PC-9 (cell line): ENCODE measurements at regions of chr1 and their contacts with region 1.

Region 1: DNA sequence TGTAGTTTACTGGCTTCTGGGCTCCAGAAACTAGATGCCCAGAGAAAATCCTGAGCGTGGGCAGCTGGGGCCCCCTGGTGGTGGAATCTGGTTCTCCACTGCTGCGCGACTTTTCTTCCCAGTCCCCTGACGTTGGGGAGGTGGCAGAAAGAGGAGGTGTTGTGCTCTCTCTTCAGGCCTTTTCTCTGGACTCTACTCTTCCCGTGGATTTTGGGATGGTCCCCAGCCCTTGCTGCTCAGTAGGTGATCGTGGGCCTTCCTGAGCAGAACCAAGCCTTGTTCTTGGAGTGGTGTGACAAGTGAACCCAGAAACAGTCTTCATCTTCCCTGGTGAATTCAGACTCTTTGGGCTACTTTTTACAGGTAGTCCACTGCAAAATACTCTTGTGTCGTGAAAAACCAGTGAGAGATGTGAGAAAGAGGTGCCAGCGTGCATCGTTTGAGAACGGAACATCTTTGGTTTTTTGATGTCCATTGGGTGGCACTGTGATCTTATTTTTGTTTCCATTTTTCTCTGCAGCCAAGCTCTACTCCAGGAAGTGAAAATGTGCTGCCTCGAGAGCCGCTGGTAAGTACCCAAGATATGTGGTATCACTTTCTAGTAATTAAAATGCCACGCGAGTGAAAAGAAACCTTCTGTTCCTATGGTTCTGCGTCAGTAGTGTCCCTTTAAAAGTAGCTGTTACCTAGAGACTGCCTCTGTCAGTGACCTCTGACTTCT is 20.2 kb downstream of the PEX14 start:
- DNase-seq: peak; percentile 45 to 76
- H3K4me3 ChIP-seq: no peak overlapping the region
- H3K27ac ChIP-seq: no peak overlapping the region
- H3K4me1 ChIP-seq: no peaks in the 10 kb centered on the region
- H3K27me3 ChIP-seq: no peaks in the 10 kb centered on the region
- CTCF ChIP-seq: peak; percentile 87

Region 2: GRCh38 chr1:10283318-10283984 is 211.5 kb before region 1 on chr1:
- CTCF ChIA-PET with region 1: no interaction called
- POLR2A ChIA-PET with region 1: no interaction called
- intact Hi-C with region 1: no loop called
- DNase-seq: peak; percentile 48 to 50
- H3K4me3 ChIP-seq: no peak overlapping the region
- H3K27ac ChIP-seq: no peak overlapping the region
- H3K4me1 ChIP-seq: no peaks in the 10 kb centered on the region
- H3K27me3 ChIP-seq: no peaks in the 10 kb centered on the region
- CTCF ChIP-seq: no peak

Region 3: DNA sequence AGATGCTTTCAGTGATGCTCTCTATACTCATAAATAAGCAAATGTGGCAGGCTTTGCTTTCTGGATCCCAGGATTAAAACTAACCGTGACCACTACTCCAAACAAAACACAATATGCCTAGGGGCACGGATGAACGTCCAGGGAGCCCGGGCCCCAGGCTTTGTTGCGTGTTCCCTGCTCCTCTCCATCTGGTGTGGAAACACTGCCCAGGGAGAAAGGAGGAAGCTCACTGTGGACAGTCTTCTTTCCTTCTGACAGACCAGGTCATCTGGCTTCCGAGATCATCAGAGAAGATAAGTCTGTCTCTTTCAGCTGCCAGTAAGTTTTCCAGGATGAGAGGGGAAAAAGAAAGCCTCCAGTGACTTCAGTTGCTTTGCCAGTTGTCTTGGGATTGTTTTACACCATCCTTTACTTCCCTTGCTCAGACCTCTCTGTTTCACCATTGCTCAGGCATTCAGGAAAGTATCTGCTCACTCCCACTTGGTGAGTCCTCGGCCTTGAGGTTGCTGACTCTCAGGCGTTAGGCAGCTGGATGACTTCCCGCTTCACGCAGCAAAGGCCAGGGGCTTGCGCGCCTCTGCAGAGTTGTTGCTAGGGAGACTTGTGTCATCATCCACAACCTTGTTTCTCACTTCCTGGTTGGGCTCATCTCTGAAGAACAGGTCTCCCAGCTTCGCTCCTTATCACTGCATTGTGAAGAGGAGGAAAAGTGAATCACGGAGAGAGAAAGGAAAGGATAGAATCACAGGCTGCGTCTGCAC is 116.7 kb before region 1 on chr1:
- CTCF ChIA-PET with region 1: interaction called, 4 read pairs
- POLR2A ChIA-PET with region 1: no interaction called
- intact Hi-C with region 1: loop called (anchors 1 kb)
- DNase-seq: peak; percentile 86 to 96
- H3K4me3 ChIP-seq: peak overlapping the region; percentile 42; the same call in 1 of the 2 replicates
- H3K27ac ChIP-seq: peak overlapping the region; percentile 95
- H3K4me1 ChIP-seq: peaks cover 39% of the 10 kb centered on the region
- H3K27me3 ChIP-seq: no peaks in the 10 kb centered on the region
- CTCF ChIP-seq: no peak

Region 4: DNA sequence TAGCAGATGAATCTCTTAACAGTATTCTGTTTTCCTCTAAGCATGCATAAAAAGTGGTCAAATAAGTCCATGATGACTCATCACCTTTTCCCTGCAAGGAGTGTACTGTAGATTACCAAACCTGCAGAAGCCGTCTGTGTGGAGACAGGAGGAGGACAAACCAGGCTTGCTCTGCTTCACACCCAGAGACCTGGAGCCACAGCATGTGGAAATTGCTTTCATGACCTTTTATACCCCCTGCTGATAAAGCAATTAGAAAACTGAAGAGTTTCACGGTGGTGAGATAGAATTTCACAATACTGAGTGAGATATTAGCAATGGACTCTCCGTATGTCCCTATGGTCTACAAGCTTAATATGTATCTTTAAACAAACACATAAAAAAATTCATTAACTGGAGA is 35.7 kb before region 1 on chr1:
- CTCF ChIA-PET with region 1: interaction called, 10 read pairs
- POLR2A ChIA-PET with region 1: interaction called, 6 read pairs
- intact Hi-C with region 1: no loop called
- DNase-seq: peak; percentile 70 to 97
- H3K4me3 ChIP-seq: no peak overlapping the region
- H3K27ac ChIP-seq: peak overlapping the region; percentile 78
- H3K4me1 ChIP-seq: peaks cover 19% of the 10 kb centered on the region
- H3K27me3 ChIP-seq: no peaks in the 10 kb centered on the region
- CTCF ChIP-seq: no peak

Region 5: GRCh38 chr1:10585948-10586524 is 91.1 kb after region 1 on chr1:
- CTCF ChIA-PET with region 1: interaction called, 13 read pairs
- POLR2A ChIA-PET with region 1: no interaction called
- intact Hi-C with region 1: no loop called
- DNase-seq: no peak
- H3K4me3 ChIP-seq: no peak overlapping the region
- H3K27ac ChIP-seq: no peak overlapping the region
- H3K4me1 ChIP-seq: no peaks in the 10 kb centered on the region
- H3K27me3 ChIP-seq: no peaks in the 10 kb centered on the region
- CTCF ChIP-seq: no peak

Region 6: DNA sequence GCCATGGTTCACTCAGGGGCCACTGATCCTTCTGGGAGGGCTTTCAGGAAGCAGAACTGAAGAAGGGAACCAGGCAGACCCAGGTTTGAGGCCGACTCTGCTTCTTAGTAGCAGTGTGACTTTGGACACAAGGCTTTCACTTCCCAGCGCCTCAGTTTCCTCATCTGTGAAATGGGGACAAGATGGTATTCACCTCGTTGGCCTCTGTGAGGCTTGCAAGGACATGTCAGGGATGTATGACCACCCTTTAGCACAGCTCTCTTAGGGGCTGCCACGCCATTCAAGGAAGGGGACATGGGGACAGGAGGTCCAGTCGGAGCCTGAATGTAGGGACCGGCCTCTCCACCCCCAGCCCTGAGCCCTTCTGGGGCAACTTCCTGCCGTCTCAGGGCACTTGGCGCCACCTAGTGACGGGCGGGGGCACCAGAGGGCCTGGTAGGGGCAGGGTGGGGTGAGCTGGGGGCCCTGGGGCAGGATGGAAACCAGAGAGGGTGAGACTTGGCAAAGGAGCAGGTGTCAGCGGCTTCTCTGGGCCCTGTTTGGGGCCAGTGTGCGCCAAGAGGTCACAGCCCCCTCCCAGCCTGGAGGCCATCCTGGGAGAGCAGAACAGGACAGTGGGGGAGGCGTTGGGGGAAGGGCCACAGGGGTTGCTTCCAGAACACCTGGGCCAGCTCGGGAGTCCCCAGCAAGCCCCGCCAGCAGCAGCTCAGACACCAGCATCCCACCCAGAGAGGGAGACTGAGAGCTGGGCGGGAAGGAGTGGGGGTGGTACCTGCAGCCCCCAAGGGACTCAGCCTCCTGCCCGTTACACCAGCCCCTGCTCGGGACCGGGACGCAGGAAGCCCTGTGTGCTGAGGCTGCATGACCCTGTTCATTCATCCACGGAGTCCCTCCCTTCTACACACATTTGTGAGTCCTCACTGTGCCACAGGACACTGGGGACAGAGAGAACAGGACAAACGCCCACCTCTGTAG is 415.1 kb after region 1 on chr1:
- CTCF ChIA-PET with region 1: no interaction called
- POLR2A ChIA-PET with region 1: no interaction called
- intact Hi-C with region 1: loop called (anchors 5 kb)
- DNase-seq: peak in 1 of 2 experiments; percentile 72
- H3K4me3 ChIP-seq: no peak overlapping the region
- H3K27ac ChIP-seq: no peak overlapping the region
- H3K4me1 ChIP-seq: no peaks in the 10 kb centered on the region
- H3K27me3 ChIP-seq: no peaks in the 10 kb centered on the region
- CTCF ChIP-seq: peak; percentile 76

Region 7: GRCh38 chr1:12019858-12020509 is 1525.1 kb after region 1 on chr1:
- CTCF ChIA-PET with region 1: no interaction called
- POLR2A ChIA-PET with region 1: interaction called, 29 read pairs
- intact Hi-C with region 1: no loop called
- DNase-seq: no peak
- H3K4me3 ChIP-seq: peak overlapping the region; percentile 74
- H3K27ac ChIP-seq: no peak overlapping the region
- H3K4me1 ChIP-seq: no peaks in the 10 kb centered on the region; the same call in 1 of the 2 replicates
- H3K27me3 ChIP-seq: no peaks in the 10 kb centered on the region
- CTCF ChIP-seq: no peak